Endothelial cell of umbilical vein (primary cell): ENCODE measurements at regions of chr2 and their contacts with region 1.

Region 1: DNA sequence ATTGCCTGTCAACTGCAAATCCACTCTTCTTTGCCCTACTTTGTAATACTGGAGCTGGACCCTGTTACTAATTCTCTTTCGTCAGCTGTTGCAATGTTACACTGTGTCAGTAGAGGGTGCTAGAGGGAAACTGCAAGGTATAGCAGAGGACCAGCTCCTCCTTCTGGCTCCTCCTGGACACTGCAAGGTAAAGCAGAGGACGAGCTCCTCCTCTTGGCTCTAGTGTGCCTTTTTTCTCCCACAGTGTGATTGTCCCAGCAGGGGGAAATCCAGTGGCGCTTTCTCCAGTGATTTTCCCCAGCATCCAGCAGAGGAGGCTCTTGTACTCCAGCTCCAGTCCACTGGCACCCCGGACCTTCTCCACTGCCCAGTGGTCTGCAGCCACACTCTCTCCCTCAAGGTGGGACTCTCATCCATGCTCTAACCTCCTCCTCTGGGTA is 95.6 kb downstream of the CAPN13 start:
- DNase-seq: peak; percentile 88
- H3K4me3 ChIP-seq: no peak overlapping the region
- H3K27ac ChIP-seq: no peak overlapping the region
- H3K4me1 ChIP-seq: no peaks in the 10 kb centered on the region
- H3K27me3 ChIP-seq: no peaks in the 10 kb centered on the region
- CTCF ChIP-seq: peak; percentile 99 to 100
- POLR2A ChIP-seq: no peak

Region 2: DNA sequence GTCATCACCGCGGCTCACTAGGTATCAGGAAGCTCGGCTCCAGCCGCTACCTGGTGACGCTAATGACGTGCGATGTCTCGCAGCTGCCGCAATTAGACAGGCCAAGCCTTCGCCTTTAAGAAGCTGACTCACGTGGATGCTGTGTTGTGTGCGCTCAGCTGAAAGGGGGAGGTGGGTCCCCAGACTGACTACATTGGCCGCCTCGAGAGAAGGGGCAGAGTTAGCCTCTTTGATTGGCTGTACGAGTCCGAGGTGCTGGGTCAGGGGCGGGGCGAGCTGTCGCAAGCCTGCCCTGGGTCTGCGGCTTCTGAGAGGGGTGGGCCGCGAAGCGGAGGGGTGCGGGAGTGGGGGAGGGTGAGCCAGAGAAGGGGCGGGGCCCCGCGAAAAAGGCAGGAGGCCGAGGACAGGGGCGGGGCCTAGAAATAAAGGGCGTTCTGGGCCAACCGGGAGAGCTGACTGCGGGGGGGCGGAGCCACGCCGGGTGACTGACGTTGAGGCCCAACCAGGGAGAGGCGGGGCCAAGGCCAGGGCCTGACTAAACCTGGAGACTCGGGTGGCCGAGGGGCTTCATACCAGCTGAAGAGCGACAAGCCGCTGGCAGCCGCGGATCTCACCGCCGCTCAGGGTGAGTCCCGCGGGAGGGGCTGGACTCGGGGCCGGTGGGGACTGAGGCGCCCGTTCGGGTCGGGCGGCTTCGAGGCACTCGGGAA is 565.1 kb before region 1 on chr2 and contains the start of gene YPEL5:
- CTCF ChIA-PET with region 1: interaction called, 20 read pairs
- POLR2A ChIA-PET with region 1: no interaction called
- dilution Hi-C with region 1: no loop called
- intact Hi-C with region 1: loop called (anchors 5 kb)
- DNase-seq: peak; percentile 100
- H3K4me3 ChIP-seq: peak within 1 kb of the TSS; percentile 75 to 92 (median 80)
- H3K27ac ChIP-seq: peak within 1 kb of the TSS; percentile 87
- H3K4me1 ChIP-seq: peaks cover 30% of the 10 kb centered on the region
- H3K27me3 ChIP-seq: peaks cover 1 to 7% of the 10 kb centered on the region in 2 experiments
- CTCF ChIP-seq: no peak
- POLR2A ChIP-seq: peak; percentile 66
- total RNA-seq, gene YPEL5: 59.3 and 62.0 TPM in 2 replicates

Region 3: GRCh38 chr2:30219886-30220850 is 491.5 kb before region 1 on chr2:
- CTCF ChIA-PET with region 1: interaction called, 17 read pairs
- POLR2A ChIA-PET with region 1: no interaction called
- dilution Hi-C with region 1: no loop called
- intact Hi-C with region 1: no loop called
- DNase-seq: no peak
- H3K4me3 ChIP-seq: no peak overlapping the region
- H3K27ac ChIP-seq: no peak overlapping the region
- H3K4me1 ChIP-seq: no peaks in the 10 kb centered on the region
- H3K27me3 ChIP-seq: peaks cover 2 to 6% of the 10 kb centered on the region in 2 experiments
- CTCF ChIP-seq: no peak
- POLR2A ChIP-seq: no peak

Region 4: DNA sequence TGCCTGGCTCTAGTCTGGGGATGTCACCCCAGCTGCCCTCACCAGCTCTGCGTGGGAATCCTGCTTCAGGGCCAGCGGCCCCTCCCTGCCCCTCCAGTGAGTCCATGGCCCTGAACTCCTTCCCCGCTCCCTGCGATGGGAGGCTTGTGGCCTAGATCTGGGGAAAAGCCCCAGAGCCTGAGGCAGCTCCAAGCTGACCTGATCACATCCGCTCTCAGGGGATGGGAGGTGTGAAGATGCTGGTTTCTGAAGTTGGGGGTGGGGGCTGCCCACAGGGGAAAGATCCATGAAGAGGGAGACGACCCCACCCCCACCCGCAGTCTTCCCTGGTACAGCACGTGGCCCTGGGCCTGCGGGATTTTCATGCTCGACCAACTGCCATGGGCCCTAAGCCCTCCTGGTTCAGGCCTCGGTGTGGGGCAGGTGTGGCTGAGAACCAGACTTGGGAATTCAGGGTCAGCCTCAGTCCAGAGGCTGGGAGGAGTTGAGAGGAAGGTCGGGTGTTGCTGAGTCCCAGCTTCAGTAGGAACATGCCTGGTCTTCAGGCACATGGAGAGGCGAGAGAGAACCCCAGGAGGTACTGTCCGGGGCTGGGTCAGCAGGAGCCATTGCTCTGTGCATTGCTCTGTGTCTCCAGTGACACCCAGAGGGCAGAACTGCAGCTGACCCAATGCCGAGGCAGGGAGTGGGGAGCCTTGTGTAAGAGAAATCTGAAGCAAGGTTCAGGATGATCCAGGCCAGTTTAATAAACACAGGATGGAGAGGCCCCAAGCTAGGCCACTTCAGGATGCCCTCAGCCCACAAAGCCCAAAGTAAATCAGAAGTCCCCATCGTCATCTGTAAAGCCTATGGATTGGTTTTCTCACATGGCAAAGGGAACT is 19.5 kb before region 1 on chr2:
- CTCF ChIA-PET with region 1: interaction called, 27 read pairs
- POLR2A ChIA-PET with region 1: no interaction called
- dilution Hi-C with region 1: no loop called
- intact Hi-C with region 1: no loop called
- DNase-seq: no peak
- H3K4me3 ChIP-seq: no peak overlapping the region
- H3K27ac ChIP-seq: no peak overlapping the region
- H3K4me1 ChIP-seq: no peaks in the 10 kb centered on the region
- H3K27me3 ChIP-seq: no peaks in the 10 kb centered on the region
- CTCF ChIP-seq: no peak
- POLR2A ChIP-seq: no peak

Region 5: GRCh38 chr2:31170071-31170698 is 458.5 kb after region 1 on chr2:
- CTCF ChIA-PET with region 1: interaction called, 45 read pairs
- POLR2A ChIA-PET with region 1: no interaction called
- dilution Hi-C with region 1: no loop called
- intact Hi-C with region 1: loop called (anchors 1 kb)
- DNase-seq: peak; percentile 47
- H3K4me3 ChIP-seq: no peak overlapping the region
- H3K27ac ChIP-seq: no peak overlapping the region
- H3K4me1 ChIP-seq: no peaks in the 10 kb centered on the region
- H3K27me3 ChIP-seq: no peaks in the 10 kb centered on the region
- CTCF ChIP-seq: peak; percentile 83 to 88
- POLR2A ChIP-seq: no peak

Region 6: DNA sequence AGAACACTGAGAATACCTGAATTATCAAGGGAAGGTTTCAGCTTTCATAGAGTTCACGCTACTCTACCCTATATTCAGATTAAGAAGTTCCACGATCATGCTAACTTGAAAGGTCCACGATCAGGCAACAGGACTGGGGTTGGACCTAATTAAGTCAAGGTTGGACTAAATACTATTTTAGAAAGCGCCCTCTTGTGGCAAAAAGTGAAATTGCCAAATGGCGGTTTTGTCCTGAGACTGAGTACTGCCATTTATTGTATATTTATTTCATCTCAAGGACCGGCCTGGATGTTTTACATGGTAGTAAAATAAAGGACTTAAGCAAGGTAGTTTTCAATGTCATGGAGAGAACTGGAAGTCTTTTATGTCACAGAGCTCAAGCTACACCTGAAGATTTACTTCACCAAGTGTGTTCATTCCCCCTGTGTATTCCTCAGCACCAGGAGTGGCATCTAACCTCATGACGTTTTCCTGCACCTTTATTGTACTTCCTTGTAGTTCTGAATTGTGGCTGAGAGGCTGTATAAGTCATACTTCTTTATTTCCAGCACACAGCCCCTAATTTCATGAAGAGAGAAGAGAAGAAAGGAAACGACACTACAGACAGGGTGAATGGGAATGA is 812.3 kb after region 1 on chr2:
- CTCF ChIA-PET with region 1: interaction called, 15 read pairs
- POLR2A ChIA-PET with region 1: no interaction called
- dilution Hi-C with region 1: no loop called
- intact Hi-C with region 1: no loop called
- DNase-seq: peak; percentile 35
- H3K4me3 ChIP-seq: no peak overlapping the region
- H3K27ac ChIP-seq: no peak overlapping the region
- H3K4me1 ChIP-seq: no peaks in the 10 kb centered on the region
- H3K27me3 ChIP-seq: no peaks in the 10 kb centered on the region
- CTCF ChIP-seq: peak; percentile 54 to 56
- POLR2A ChIP-seq: no peak